Heart right ventricle (tissue), 16 donors: ENCODE measurements at regions of chr17 and their contacts with region 1.

Region 1: GRCh38 chr17:77471984-77472461 is 331.3 kb downstream of the SEC14L1 start:
- DNase-seq: peak; percentile 27 to 63
- ATAC-seq: peak; percentile 37 to 66 (median 52)
- H3K4me3 ChIP-seq: peak overlapping the region in 3 of 10 donors; percentile 1 to 16 (median 15)
- H3K27ac ChIP-seq: peak overlapping the region; percentile 17 to 88 (median 80)
- H3K4me1 ChIP-seq: peaks cover 34 to 96% (median 92%) of the 10 kb centered on the region in 9 donors
- H3K27me3 ChIP-seq: no peaks in the 10 kb centered on the region
- CTCF ChIP-seq: no peak

Region 2: GRCh38 chr17:77437017-77437416 is 35.0 kb before region 1 on chr17:
- intact Hi-C with region 1: loop called in 5 of 10 experiments (anchors 5 kb)
- DNase-seq: peak; percentile 71 to 74
- ATAC-seq: peak; percentile 7 to 38 (median 20)
- H3K4me3 ChIP-seq: peak overlapping the region in 4 of 10 donors; percentile 30 to 39 (median 38)
- H3K27ac ChIP-seq: peak overlapping the region in 9 of 10 donors; percentile 9 to 89 (median 61)
- H3K4me1 ChIP-seq: peaks cover 78 to 100% (median 97%) of the 10 kb centered on the region in 9 donors
- H3K27me3 ChIP-seq: no peaks in the 10 kb centered on the region
- CTCF ChIP-seq: peak in 1 of 9 donors; percentile 12